HEK293 (cell line): ENCODE measurements at regions of chr11 and their contacts with region 1.

Region 1: DNA sequence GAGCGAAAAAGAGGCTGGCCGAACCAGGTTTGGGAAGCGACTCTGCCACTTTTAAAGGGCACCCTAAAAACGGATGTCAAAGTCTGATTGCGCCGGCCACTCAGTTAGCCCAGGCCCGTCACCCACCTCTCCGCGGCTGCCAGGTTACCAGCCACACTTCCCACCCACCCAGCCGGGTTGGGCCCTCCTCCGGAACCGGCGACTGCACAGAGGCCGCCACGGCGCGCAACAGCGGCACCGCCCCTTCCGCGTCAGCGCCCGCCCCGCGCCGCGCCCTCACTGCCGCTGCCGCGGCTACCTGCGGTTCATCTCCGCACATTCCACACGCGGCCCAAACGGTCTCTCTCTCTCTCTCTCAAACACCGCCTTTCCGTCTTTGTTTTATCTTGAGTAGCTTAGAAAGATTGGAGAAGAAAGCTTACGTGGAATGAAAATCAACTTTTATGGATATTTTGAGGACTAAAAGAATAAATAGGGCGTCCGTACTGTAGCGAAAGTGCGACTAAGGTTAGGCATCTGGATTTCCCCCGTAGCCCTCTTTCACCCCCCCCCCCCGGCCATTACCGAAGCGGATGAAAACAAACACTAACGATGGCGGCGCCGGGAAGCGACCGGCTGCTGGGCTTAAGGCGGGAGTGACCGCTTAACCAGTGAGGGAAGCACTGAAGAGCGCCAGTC is at the starts of genes ATG13 and HARBI1:
- H3K4me3 ChIP-seq: peak within 1 kb of the TSS; percentile 79
- H3K27ac ChIP-seq: peak within 1 kb of the TSS; percentile 83
- H3K4me1 ChIP-seq: no peaks in the 10 kb centered on the region
- CTCF ChIP-seq: no peak

Region 2: GRCh38 chr11:46631676-46632075 is 14.5 kb after region 1 on chr11:
- CTCF ChIA-PET with region 1: interaction called, 16 read pairs
- POLR2A ChIA-PET with region 1: interaction called, 7 read pairs
- H3K4me3 ChIP-seq: no peak overlapping the region
- H3K27ac ChIP-seq: no peak overlapping the region
- H3K4me1 ChIP-seq: no peaks in the 10 kb centered on the region
- CTCF ChIP-seq: no peak